ENCODE measurements at regions of chr6 and their contacts with region 1.

Region 1: GRCh38 chr6:153002607-153003365 is at the start of gene MTRF1L:
- DNase-seq: peak; percentile 96
- H3K4me3 Mint-ChIP-seq: peak within 1 kb of the TSS; percentile 97
- H3K27ac Mint-ChIP-seq: peak within 1 kb of the TSS; percentile 90
- H3K4me1 Mint-ChIP-seq: peaks cover 28% of the 10 kb centered on the region
- H3K27me3 Mint-ChIP-seq: peaks cover 12% of the 10 kb centered on the region
- total RNA-seq, gene MTRF1L: 20.6 and 21.3 TPM in 2 replicates

Region 2: DNA sequence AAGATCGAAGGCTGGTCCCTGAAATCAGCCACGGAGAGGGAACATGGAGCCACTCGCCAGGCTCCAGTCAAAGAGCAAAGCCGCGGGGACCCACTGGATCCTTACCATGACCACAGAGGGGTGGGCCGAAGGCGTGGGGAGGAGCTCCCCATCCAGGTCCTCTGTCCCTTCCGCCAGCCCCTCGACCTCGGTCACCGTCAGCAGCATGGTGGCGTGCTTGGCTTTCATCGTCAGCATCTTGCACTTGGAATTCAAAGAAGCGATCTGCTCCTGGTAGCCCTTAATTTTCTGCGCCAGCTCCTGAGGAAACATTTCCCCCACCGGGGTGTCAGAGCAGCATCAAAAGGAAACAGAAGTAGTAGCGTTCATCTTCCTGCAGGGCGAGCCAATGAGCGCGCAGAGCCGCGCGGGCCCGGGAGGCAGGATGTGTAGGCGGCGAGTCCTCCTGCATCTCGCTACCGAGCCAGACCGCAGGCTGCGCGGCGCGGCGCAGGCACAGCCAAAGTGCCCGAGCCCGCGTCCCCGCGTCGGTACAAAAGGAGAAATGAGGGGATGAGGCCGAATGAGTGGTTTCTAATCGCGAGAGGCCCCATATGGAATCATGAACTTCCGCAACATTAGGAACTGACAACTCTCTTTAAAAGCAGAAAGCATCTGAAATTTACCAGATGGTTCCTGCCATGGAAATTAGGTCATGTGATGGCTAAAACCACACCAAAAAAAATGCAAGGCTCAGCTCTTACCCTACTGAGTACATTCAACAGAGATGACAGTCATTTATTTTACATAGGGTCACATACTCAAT is 700.8 kb before region 1 on chr6:
- intact Hi-C with region 1: loop called (anchors 10 kb)
- DNase-seq: peak; percentile 97
- H3K4me3 Mint-ChIP-seq: peak overlapping the region; percentile 94
- H3K27ac Mint-ChIP-seq: peak overlapping the region; percentile 99
- H3K4me1 Mint-ChIP-seq: peaks cover 23% of the 10 kb centered on the region
- H3K27me3 Mint-ChIP-seq: no peaks in the 10 kb centered on the region

Region 3: DNA sequence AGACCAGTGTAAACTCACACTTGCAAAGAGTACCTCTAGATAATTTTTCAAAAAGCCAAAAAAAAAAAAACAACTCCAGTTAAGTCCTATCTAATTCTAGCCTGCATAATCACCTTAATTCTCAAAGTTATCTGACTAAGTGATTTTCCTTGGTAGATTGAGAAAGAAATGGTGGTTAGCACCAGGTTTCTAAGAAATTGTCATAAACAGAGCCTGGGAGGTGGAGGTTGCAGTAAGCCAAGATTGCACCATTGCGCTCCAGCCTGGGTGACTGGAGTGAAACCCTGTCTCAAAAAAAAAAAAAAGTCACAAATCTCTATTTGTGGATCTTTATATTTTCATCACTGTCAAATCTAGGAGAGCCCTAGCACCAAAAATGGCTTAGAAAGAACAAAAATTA is 28.9 kb before region 1 on chr6:
- intact Hi-C with region 1: loop called (anchors 5 kb)
- DNase-seq: no peak
- H3K4me3 Mint-ChIP-seq: peak overlapping the region; percentile 51
- H3K27ac Mint-ChIP-seq: peak overlapping the region; percentile 20
- H3K4me1 Mint-ChIP-seq: peaks cover 45% of the 10 kb centered on the region
- H3K27me3 Mint-ChIP-seq: no peaks in the 10 kb centered on the region

Region 4: GRCh38 chr6:152982768-152983636 is 19.8 kb before region 1 on chr6 and contains the start of gene FBXO5:
- intact Hi-C with region 1: loop called (anchors 2 kb)
- DNase-seq: peak; percentile 99
- H3K4me3 Mint-ChIP-seq: peak within 1 kb of the TSS; percentile 92
- H3K27ac Mint-ChIP-seq: peak within 1 kb of the TSS; percentile 100
- H3K4me1 Mint-ChIP-seq: peaks cover 46% of the 10 kb centered on the region
- H3K27me3 Mint-ChIP-seq: no peaks in the 10 kb centered on the region
- total RNA-seq, gene FBXO5: 34.9 and 36.4 TPM in 2 replicates

Region 5: DNA sequence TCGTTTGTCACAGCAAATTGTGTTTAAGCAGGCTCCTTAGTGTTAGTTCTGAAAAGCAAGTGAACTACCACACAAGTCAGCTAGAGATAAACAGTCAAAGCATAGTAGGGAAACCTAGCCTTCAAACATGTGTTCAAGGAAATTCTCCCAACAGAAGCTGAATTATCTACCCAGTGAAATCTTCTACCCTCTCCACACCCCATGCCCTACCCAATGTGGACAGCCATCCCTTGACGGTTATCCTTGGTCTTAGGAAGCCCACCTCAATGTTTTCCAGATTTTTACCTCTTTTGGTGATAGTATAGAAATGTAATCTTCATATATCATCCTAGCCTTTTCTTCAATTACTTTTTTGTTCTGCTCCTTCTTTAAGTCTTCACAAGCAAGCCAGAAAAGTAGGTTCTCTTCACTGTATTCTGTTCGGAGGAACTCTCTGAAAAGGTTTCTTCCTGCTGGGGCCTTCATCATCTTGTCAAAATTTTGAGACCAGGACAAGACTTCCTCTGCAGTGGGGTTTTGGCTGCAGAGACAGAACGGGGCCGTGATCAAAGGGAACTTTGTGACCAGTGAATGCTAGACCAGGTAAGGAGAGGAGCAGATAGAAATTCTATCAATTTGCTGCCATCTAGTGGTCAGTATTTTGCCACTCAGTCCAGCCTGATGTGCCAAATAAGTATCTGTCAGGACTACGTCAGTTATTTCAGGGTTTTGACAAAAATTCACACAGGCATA is 21.4 kb after region 1 on chr6:
- intact Hi-C with region 1: loop called (anchors 2 kb)
- DNase-seq: peak; percentile 84
- H3K4me3 Mint-ChIP-seq: no peak overlapping the region
- H3K27ac Mint-ChIP-seq: no peak overlapping the region
- H3K4me1 Mint-ChIP-seq: no peaks in the 10 kb centered on the region
- H3K27me3 Mint-ChIP-seq: peaks cover 35% of the 10 kb centered on the region

Region 6: DNA sequence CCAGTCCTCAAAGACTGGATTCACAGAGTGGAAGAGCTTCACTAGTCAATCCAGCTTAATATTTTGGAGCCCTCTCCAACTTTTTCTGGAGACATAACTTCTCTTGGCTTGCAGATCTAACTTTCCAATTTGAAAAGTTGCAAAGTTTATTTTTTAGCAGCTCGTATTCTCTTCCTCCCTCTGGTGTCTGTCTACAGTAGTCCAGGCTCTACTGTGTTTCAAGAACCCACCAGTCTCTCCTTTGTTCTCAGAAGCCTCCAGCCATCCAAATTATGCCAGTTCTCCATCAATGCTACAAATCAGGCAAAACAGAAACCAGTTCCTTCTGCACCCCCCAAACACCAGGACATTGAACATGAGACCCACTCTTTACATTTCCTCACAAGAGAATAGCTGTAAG is 660.2 kb after region 1 on chr6:
- intact Hi-C with region 1: no loop called
- DNase-seq: no peak
- H3K4me3 Mint-ChIP-seq: no peak overlapping the region
- H3K27ac Mint-ChIP-seq: no peak overlapping the region
- H3K4me1 Mint-ChIP-seq: no peaks in the 10 kb centered on the region
- H3K27me3 Mint-ChIP-seq: no peaks in the 10 kb centered on the region